GM12878 (cell line): ENCODE measurements at regions of chr19 and their contacts with region 1.

Region 1: DNA sequence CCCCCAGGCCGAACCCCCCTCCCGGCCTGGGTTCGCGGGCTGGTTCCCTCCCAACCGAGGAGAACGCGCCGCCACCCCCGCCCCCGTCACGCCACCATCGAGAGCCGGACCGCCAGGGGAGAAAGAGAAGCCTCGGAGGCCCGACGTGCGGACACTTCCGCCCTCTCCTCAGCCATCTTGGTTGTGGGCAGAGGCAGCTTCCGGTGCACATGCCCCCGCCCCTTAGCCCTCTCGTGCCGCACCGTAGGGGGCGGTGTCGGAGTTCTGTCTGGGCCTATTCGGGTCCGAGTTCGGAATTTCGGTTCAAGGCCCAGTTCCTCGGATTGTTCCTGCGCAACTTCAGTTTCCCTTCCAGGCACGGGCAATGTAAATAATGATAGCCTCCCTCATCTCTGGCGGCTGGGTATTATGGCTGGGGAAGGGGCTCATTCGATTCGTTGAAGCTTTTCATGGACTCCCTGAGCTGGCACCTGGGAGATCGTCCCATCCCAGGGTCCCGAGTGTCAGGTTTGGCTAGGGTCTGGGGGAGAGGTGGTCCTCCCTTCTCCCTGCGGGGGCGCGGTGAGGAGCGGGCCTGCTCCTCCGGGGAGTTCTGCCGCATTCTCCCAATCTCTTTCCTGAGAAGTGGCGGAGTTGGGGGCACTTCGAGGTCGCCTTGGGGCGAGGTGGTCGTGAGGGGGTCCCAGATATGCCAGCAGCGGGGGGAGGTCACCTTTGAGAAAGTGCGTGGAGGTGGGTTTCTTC is at the starts of genes IER2 and STX10:
- DNase-seq: no peak
- ATAC-seq: peak; percentile 62
- H3K4me3 ChIP-seq: peak within 1 kb of the TSS; percentile 97
- H3K27ac ChIP-seq: peak within 1 kb of the TSS; percentile 97
- H3K4me1 ChIP-seq: peaks cover 4% of the 10 kb centered on the region
- H3K27me3 ChIP-seq: no peaks in the 10 kb centered on the region
- CTCF ChIP-seq: peak; percentile 59 to 70 (median 66)
- EP300 ChIP-seq: no peak
- POLR2A ChIP-seq: peak; percentile 69
- RAD21 ChIP-seq: peak; percentile 42; the same call in 1 of the 2 replicates
- polyA plus RNA-seq, gene IER2: 2.8 to 9.3 TPM
- polyA plus RNA-seq, gene STX10: 0.56 to 3.7 TPM

Region 2: GRCh38 chr19:12847159-12848139 is 302.9 kb before region 1 on chr19:
- CTCF ChIA-PET with region 1: no interaction called
- POLR2A ChIA-PET with region 1: no interaction called
- RAD21 ChIA-PET with region 1: no interaction called
- SMC1A ChIA-PET with region 1: no interaction called
- in situ Hi-C with region 1: no loop called
- intact Hi-C with region 1: no loop called
- DNase-seq: no peak
- ATAC-seq: peak; percentile 100
- H3K4me3 ChIP-seq: no peak overlapping the region
- H3K27ac ChIP-seq: no peak overlapping the region
- H3K4me1 ChIP-seq: no peaks in the 10 kb centered on the region; the same call in 1 of the 2 replicates
- H3K27me3 ChIP-seq: no peaks in the 10 kb centered on the region; a peak in 1 of 4 replicates
- CTCF ChIP-seq: peak; percentile 92 to 98 (median 97); a peak in 5 of 6 replicates
- EP300 ChIP-seq: no peak
- POLR2A ChIP-seq: no peak
- RAD21 ChIP-seq: peak; percentile 88

Region 3: GRCh38 chr19:13104360-13104847 is 46.0 kb before region 1 on chr19:
- CTCF ChIA-PET with region 1: interaction called, 7 read pairs
- POLR2A ChIA-PET with region 1: interaction called, 6 read pairs
- RAD21 ChIA-PET with region 1: interaction called, 3 read pairs
- SMC1A ChIA-PET with region 1: no interaction called
- in situ Hi-C with region 1: no loop called
- intact Hi-C with region 1: loop called (anchors 5 kb)
- DNase-seq: no peak
- ATAC-seq: peak; percentile 45
- H3K4me3 ChIP-seq: peak overlapping the region; percentile 61
- H3K27ac ChIP-seq: peak overlapping the region; percentile 90
- H3K4me1 ChIP-seq: peaks cover 41% of the 10 kb centered on the region
- H3K27me3 ChIP-seq: no peaks in the 10 kb centered on the region
- CTCF ChIP-seq: peak; percentile 79 to 99 (median 96)
- EP300 ChIP-seq: no peak
- POLR2A ChIP-seq: peak; percentile 72
- RAD21 ChIP-seq: peak; percentile 45; the same call in 1 of the 2 replicates

Region 4: DNA sequence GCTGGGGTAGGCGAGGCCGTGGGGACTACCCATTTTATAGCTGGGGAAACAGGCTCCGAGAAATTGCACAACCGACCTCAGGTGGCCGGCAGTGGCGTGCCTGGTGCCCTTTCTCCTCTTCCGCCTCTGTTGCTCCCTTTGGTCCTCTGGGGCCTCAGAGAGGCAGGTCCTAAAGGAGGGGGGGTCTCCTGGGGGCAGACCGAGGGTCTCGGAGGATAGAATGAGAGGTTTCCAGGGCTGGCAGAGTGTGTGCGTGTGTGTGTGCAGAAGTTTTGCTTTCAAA is 11.5 kb before region 1 on chr19:
- CTCF ChIA-PET with region 1: no interaction called
- POLR2A ChIA-PET with region 1: no interaction called
- RAD21 ChIA-PET with region 1: no interaction called
- SMC1A ChIA-PET with region 1: no interaction called
- in situ Hi-C with region 1: no loop called
- intact Hi-C with region 1: no loop called
- DNase-seq: no peak
- ATAC-seq: no peak
- H3K4me3 ChIP-seq: no peak overlapping the region
- H3K27ac ChIP-seq: no peak overlapping the region
- H3K4me1 ChIP-seq: no peaks in the 10 kb centered on the region
- H3K27me3 ChIP-seq: no peaks in the 10 kb centered on the region
- CTCF ChIP-seq: no peak
- EP300 ChIP-seq: no peak
- POLR2A ChIP-seq: no peak
- RAD21 ChIP-seq: no peak

Region 5: GRCh38 chr19:13162518-13163314 is 12.4 kb after region 1 on chr19:
- CTCF ChIA-PET with region 1: interaction called, 10 read pairs
- POLR2A ChIA-PET with region 1: interaction called, 41 read pairs
- RAD21 ChIA-PET with region 1: interaction called, 39 read pairs
- SMC1A ChIA-PET with region 1: interaction called, 37 read pairs
- in situ Hi-C with region 1: no loop called
- intact Hi-C with region 1: no loop called
- DNase-seq: peak; percentile 80
- ATAC-seq: peak; percentile 74
- H3K4me3 ChIP-seq: peak overlapping the region; percentile 74
- H3K27ac ChIP-seq: peak overlapping the region; percentile 85
- H3K4me1 ChIP-seq: peaks cover 54% of the 10 kb centered on the region
- H3K27me3 ChIP-seq: no peaks in the 10 kb centered on the region
- CTCF ChIP-seq: no peak
- EP300 ChIP-seq: no peak
- POLR2A ChIP-seq: peak; percentile 81
- RAD21 ChIP-seq: no peak

Region 6: DNA sequence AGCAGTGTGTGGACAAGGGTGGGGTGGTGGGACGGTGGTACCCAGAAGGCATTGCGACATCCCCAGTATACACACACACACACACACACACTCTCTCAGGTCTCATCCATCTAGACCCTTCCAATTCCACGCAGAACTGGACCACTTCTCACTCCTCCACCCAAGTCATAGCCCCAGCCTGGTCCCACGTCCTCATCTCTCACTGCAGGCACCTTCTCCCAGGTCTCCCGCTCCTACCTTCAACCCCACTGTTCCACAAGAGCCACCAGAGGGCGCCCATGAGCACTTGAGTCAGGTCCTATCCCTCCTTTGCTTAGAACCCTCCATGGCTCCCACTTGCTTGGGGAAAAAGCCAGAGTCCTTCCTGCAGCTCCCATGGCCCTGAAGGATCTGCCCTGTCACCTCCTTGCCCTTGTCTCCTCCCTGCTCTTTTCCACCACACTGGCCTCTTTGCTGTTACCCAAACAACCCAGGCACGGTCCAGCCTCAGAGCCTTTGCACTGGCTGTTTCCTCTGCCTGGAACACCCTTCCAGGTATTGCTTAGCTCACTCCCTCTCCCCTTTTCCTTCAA is 62.5 kb after region 1 on chr19:
- CTCF ChIA-PET with region 1: interaction called, 3 read pairs
- POLR2A ChIA-PET with region 1: interaction called, 4 read pairs
- RAD21 ChIA-PET with region 1: interaction called, 3 read pairs
- SMC1A ChIA-PET with region 1: interaction called, 3 read pairs
- in situ Hi-C with region 1: no loop called
- intact Hi-C with region 1: loop called (anchors 1 kb)
- DNase-seq: peak; percentile 20
- ATAC-seq: peak; percentile 20; the same call in 1 of the 3 replicates
- H3K4me3 ChIP-seq: no peak overlapping the region
- H3K27ac ChIP-seq: no peak overlapping the region
- H3K4me1 ChIP-seq: peaks cover 19% of the 10 kb centered on the region
- H3K27me3 ChIP-seq: no peaks in the 10 kb centered on the region
- CTCF ChIP-seq: peak; percentile 63 to 80 (median 78)
- EP300 ChIP-seq: no peak
- POLR2A ChIP-seq: no peak
- RAD21 ChIP-seq: peak; percentile 48

Region 7: DNA sequence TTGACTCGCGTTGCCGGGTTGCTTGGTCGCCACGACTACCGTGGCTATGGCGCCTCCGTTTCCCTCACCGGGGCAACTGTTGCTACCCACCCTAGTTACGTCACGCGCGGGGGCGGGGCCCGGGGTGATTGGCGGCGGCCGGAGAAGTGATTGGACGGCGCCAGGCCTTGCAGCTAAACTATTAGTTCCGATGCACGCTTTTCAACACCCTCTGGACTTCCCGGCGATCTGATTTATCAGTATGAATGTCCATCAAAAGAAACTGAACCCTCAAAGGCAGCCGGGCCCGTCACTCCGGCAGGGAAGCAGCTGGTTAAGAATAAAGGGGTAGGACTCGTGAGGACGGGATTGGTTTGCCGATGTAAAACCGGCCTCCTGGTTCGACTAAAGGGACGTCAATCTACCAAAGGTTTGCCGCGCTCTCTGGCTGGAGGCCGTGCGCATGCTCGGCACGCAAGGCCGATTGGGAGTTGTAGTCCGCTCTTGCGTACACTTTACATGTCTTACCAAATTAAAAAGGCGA is 855.9 kb after region 1 on chr19 and contains the start of gene RFX1:
- CTCF ChIA-PET with region 1: no interaction called
- POLR2A ChIA-PET with region 1: no interaction called
- RAD21 ChIA-PET with region 1: interaction called, 3 read pairs
- SMC1A ChIA-PET with region 1: no interaction called
- in situ Hi-C with region 1: no loop called
- intact Hi-C with region 1: loop called (anchors 10 kb)
- DNase-seq: peak; percentile 99
- ATAC-seq: peak; percentile 86
- H3K4me3 ChIP-seq: peak within 1 kb of the TSS; percentile 79
- H3K27ac ChIP-seq: peak within 1 kb of the TSS; percentile 95
- H3K4me1 ChIP-seq: peaks cover 41% of the 10 kb centered on the region
- H3K27me3 ChIP-seq: no peaks in the 10 kb centered on the region
- CTCF ChIP-seq: no peak
- EP300 ChIP-seq: peak in 1 of 2 experiments; percentile 79; a peak in 1 of 4 replicates
- POLR2A ChIP-seq: no peak
- RAD21 ChIP-seq: no peak
- polyA plus RNA-seq, gene RFX1: 0.05 to 0.29 TPM